Posterior cingulate gyrus (tissue), 11 donors: ENCODE measurements at regions of chr18 and their contacts with region 1.

Region 1: DNA sequence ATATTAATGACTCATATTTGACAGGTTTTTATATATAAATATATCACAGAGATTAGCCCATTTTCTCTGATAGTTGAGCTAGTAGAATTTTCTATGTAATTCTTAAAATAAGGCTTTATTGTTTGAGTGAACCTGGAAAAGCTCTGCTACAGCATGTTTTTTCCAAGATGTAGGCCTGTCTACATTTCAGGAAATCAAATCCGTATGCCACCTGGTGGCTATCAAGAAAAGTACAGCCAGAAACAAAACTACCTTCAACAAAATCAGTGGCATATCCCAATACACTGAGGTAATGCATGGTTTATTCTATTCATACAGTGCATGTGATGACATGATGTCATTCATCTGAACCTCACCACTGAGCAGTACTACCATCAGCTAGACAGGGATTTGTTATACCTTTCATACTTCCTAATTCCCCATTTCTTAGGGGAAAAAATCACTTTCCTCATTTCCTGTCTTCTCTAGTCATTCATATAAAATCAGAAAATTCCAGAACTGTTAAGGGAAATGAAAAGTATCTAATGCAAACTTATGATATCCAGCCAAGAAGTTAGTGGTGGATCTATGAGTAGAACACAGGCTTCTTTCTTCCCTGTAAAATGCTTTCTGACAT is 310.4 kb upstream of the SYT4 start:
- DNase-seq: no peak

Region 2: DNA sequence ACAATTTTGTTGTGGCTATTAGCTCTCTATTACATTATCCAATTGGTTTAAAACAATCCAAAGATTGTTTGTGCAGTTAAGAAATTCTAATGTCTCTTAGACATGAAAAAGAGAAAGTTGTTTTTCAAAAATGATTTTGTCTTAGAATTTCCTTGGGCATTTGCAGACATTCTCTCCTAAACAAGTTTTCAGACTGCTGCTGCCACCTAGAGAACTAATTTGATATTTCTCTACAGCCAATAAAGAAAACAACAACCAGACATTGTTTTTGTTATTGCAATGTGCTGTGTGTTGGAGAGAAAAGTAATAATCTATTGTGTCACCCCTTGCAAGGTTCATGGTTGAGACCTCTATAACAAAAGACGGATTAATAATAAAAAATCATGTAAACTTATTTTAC is 191.4 kb before region 1 on chr18:
- intact Hi-C with region 1: no loop called
- DNase-seq: no peak

Region 3: GRCh38 chr18:43486462-43486861 is 101.2 kb before region 1 on chr18:
- intact Hi-C with region 1: no loop called
- DNase-seq: no peak

Region 4: DNA sequence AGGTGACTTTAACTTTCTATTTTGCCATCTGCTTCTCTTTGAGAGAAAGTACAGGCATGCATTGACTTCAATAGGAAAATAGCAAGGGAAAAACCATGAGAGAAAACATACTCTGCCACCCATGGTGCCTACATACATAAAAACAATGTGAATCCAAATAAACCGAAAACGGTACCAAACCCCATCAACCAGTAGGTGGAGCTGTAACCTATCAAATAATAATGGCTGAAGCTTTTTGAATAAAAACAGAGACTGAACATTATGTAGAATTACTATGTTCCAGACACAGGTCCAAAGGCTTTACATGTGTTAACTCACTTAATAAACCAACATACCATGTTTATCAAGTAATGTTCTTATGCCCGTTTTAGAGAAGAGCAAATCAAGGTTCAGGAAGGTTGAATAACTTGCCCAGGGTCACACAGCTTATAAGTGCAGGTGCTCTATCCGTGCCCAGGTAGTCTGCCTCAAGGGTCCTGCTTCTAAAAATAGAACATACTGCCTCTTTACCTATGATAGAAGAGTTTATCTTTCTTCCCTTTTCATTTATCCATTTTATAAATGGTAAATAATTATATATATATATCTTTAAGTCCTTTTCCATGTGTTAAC is 16.5 kb before region 1 on chr18:
- intact Hi-C with region 1: loop called (anchors 2 kb)
- DNase-seq: no peak